CD4-positive, alpha-beta T cell (primary cell): ENCODE measurements at regions of chr1 and their contacts with region 1.

Region 1: DNA sequence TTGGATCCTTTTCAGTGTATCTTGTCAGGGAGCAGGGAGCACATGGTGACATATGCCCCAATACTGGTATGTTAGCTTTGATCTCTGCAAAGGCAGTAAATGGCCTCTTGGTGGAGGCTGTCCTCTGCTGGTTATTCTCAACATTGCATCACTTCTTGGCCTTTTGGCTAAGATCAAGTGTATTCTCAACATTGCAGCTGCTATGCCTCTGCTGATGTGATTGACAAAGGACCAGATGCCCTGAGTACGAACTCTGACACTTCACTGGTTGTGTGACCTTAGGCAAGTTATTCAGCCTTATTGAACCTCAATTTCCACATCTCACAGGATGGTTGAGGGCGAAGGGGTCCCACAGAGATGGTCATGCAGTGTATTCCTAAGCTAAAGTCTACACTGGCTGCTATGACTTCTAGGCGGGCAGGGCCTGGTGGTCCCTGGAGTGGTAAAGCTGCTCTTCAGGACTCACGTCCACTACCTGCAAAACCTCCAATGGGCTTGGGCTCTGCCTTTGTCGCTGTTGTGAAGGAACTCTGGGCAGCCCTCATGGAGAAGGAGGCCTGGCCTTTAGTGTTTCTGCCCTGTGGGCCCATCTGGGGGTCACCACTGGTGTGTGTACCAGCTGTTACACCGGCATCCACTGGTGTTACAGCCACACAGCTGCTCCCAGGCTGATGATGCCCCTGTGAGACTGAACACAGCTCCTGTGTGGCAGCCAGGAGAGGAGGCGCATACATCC is 64.8 kb downstream of the DNTTIP2 start:
- DNase-seq: peak in 9 of 14 experiments; percentile 8 to 72 (median 25)
- ATAC-seq: peak; percentile 31
- H3K4me3 ChIP-seq: no peak overlapping the region
- H3K4me3 Mint-ChIP-seq: no peak overlapping the region
- H3K27ac ChIP-seq: no peak overlapping the region
- H3K27ac Mint-ChIP-seq: no peak overlapping the region
- H3K4me1 ChIP-seq: peaks cover 17% of the 10 kb centered on the region
- H3K4me1 Mint-ChIP-seq: peaks cover 22% of the 10 kb centered on the region
- H3K27me3 ChIP-seq: no peaks in the 10 kb centered on the region
- H3K27me3 Mint-ChIP-seq: no peaks in the 10 kb centered on the region
- CTCF ChIP-seq: peak; percentile 71

Region 2: GRCh38 chr1:93304716-93305138 is 509.5 kb before region 1 on chr1:
- CTCF ChIA-PET with region 1: interaction called, 7 read pairs
- POLR2A ChIA-PET with region 1: no interaction called
- intact Hi-C with region 1: loop called in 1 of 2 experiments (anchors 10 kb)
- DNase-seq: peak in 12 of 14 experiments; percentile 5 to 80 (median 34)
- ATAC-seq: peak; percentile 73
- H3K4me3 ChIP-seq: no peak overlapping the region
- H3K4me3 Mint-ChIP-seq: no peak overlapping the region
- H3K27ac ChIP-seq: no peak overlapping the region
- H3K27ac Mint-ChIP-seq: no peak overlapping the region
- H3K4me1 ChIP-seq: no peaks in the 10 kb centered on the region
- H3K4me1 Mint-ChIP-seq: no peaks in the 10 kb centered on the region
- H3K27me3 ChIP-seq: no peaks in the 10 kb centered on the region
- H3K27me3 Mint-ChIP-seq: no peaks in the 10 kb centered on the region
- CTCF ChIP-seq: peak; percentile 92